B cell (primary cell): ENCODE measurements at regions of chr6 and their contacts with region 1.

Region 1: DNA sequence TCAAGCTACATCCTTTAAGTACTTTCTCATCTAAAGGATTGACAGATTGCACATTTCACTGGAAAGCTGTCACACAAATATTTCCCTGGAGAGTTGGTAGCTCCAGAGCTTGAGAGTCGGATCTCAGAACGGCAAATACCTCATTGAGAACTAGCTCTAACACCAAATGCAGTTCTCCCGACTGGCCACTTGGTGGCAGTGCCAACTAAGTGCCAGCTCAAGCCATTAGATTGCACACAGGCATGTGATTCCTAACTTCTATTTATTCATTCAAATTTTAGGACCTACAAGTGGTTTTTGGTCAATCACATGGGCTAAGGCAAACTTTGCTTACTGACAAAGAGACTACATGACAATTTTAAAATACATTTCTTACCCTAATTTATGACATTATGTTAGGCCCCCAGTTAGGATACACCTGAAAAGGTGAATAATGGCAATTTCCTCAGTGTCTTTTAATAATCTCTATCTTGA is 7.9 kb upstream of the MCHR2 start:
- DNase-seq: peak; percentile 37
- ATAC-seq: peak; percentile 49
- H3K4me3 ChIP-seq: no peak overlapping the region
- H3K4me3 Mint-ChIP-seq: no peak overlapping the region
- H3K27ac ChIP-seq: no peak overlapping the region
- H3K27ac Mint-ChIP-seq: no peak overlapping the region
- H3K4me1 ChIP-seq: no peaks in the 10 kb centered on the region
- H3K4me1 Mint-ChIP-seq: no peaks in the 10 kb centered on the region
- H3K27me3 ChIP-seq: peaks cover 0 to 5% (median 2%) of the 10 kb centered on the region in 4 experiments
- H3K27me3 Mint-ChIP-seq: peaks cover 29% of the 10 kb centered on the region
- CTCF ChIP-seq: peak; percentile 97

Region 2: GRCh38 chr6:100719883-100720682 is 718.1 kb after region 1 on chr6:
- CTCF ChIA-PET with region 1: no interaction called
- POLR2A ChIA-PET with region 1: no interaction called
- intact Hi-C with region 1: loop called (anchors 2 kb)
- DNase-seq: peak; percentile 7
- ATAC-seq: no peak
- H3K4me3 ChIP-seq: no peak overlapping the region
- H3K4me3 Mint-ChIP-seq: no peak overlapping the region
- H3K27ac ChIP-seq: no peak overlapping the region
- H3K27ac Mint-ChIP-seq: peak overlapping the region; percentile 2
- H3K4me1 ChIP-seq: no peaks in the 10 kb centered on the region
- H3K4me1 Mint-ChIP-seq: peaks cover 6% of the 10 kb centered on the region
- H3K27me3 ChIP-seq: no peaks in the 10 kb centered on the region
- H3K27me3 Mint-ChIP-seq: no peaks in the 10 kb centered on the region
- CTCF ChIP-seq: peak; percentile 61